ENCODE measurements at regions of chr2 and their contacts with region 1.

Region 1: GRCh38 chr2:210158236-210158635 is 13.0 kb downstream of the KANSL1L start:
- DNase-seq: no peak
- ATAC-seq: no peak
- H3K4me3 ChIP-seq: no peak overlapping the region
- H3K27ac ChIP-seq: no peak overlapping the region
- H3K4me1 ChIP-seq: no peaks in the 10 kb centered on the region
- H3K27me3 ChIP-seq: no peaks in the 10 kb centered on the region
- CTCF ChIP-seq: no peak
- POLR2A ChIP-seq: no peak
- RAD21 ChIP-seq: no peak

Region 2: DNA sequence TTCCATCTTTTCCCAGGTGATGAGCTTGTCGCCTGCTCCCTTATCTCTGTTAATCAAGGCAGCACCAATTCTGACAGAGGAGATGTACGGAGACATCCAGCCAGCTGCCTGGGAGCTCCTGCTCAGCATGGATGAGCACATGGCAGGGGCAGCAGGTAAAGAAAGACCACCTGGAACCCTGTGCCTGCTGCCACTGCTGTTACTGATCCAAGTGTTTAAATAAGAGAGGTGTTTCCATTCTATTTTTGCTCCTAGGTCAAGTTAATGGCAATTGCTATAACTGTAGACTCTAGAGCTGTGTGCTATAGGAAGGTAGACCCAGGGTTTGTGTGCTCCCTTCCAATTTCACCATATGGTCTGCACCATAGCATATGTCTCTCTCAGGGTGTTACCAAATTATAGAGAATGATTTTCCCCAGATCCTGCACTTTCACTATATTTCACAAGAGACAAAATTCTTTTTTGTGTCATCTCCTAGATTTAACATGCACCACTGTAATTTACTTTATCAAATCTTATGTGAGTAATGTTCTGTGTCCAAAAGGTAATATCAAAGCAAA is 244.4 kb before region 1 on chr2:
- CTCF ChIA-PET with region 1: no interaction called
- POLR2A ChIA-PET with region 1: no interaction called
- RAD21 ChIA-PET with region 1: no interaction called
- intact Hi-C with region 1: no loop called
- DNase-seq: no peak
- ATAC-seq: no peak
- H3K4me3 ChIP-seq: no peak overlapping the region
- H3K27ac ChIP-seq: no peak overlapping the region
- H3K4me1 ChIP-seq: no peaks in the 10 kb centered on the region
- H3K27me3 ChIP-seq: no peaks in the 10 kb centered on the region
- CTCF ChIP-seq: no peak
- POLR2A ChIP-seq: no peak
- RAD21 ChIP-seq: no peak

Region 3: GRCh38 chr2:210112871-210113270 is 45.4 kb before region 1 on chr2:
- CTCF ChIA-PET with region 1: no interaction called
- POLR2A ChIA-PET with region 1: no interaction called
- RAD21 ChIA-PET with region 1: no interaction called
- intact Hi-C with region 1: loop called (anchors 5 kb)
- DNase-seq: no peak
- ATAC-seq: no peak
- H3K4me3 ChIP-seq: no peak overlapping the region
- H3K27ac ChIP-seq: no peak overlapping the region
- H3K4me1 ChIP-seq: no peaks in the 10 kb centered on the region
- H3K27me3 ChIP-seq: no peaks in the 10 kb centered on the region
- CTCF ChIP-seq: no peak
- POLR2A ChIP-seq: no peak
- RAD21 ChIP-seq: no peak

Region 4: GRCh38 chr2:210302326-210302725 is 144.1 kb after region 1 on chr2:
- CTCF ChIA-PET with region 1: no interaction called
- POLR2A ChIA-PET with region 1: no interaction called
- RAD21 ChIA-PET with region 1: no interaction called
- intact Hi-C with region 1: no loop called
- DNase-seq: no peak
- ATAC-seq: no peak
- H3K4me3 ChIP-seq: no peak overlapping the region
- H3K27ac ChIP-seq: no peak overlapping the region
- H3K4me1 ChIP-seq: no peaks in the 10 kb centered on the region
- H3K27me3 ChIP-seq: no peaks in the 10 kb centered on the region
- CTCF ChIP-seq: no peak
- POLR2A ChIP-seq: no peak
- RAD21 ChIP-seq: no peak

Measured in HCT116 (cell line).